T-cell (primary cell): ENCODE measurements at regions of chr3 and their contacts with region 1.

Region 1: GRCh38 chr3:153614563-153614962 is 452.5 kb downstream of the RAP2B start:
- DNase-seq: no peak
- ATAC-seq: no peak
- H3K4me3 ChIP-seq: no peak overlapping the region
- H3K4me3 Mint-ChIP-seq: no peak overlapping the region
- H3K27ac ChIP-seq: no peak overlapping the region
- H3K27ac Mint-ChIP-seq: no peak overlapping the region
- H3K4me1 ChIP-seq: no peaks in the 10 kb centered on the region
- H3K4me1 Mint-ChIP-seq: peaks cover 0 to 3% (median 0%) of the 10 kb centered on the region in 3 donors
- H3K27me3 ChIP-seq: no peaks in the 10 kb centered on the region
- H3K27me3 Mint-ChIP-seq: no peaks in the 10 kb centered on the region

Region 2: GRCh38 chr3:153138276-153139210 is 476.0 kb before region 1 on chr3:
- CTCF ChIA-PET with region 1: interaction called in 1 of 2 experiments, 10 read pairs
- POLR2A ChIA-PET with region 1: no interaction called
- DNase-seq: peak in 1 of 35 experiments; percentile 5
- ATAC-seq: no peak
- H3K4me3 ChIP-seq: no peak overlapping the region
- H3K4me3 Mint-ChIP-seq: no peak overlapping the region
- H3K27ac ChIP-seq: no peak overlapping the region
- H3K27ac Mint-ChIP-seq: no peak overlapping the region
- H3K4me1 ChIP-seq: peaks cover 0 to 4% of the 10 kb centered on the region in 2 experiments
- H3K4me1 Mint-ChIP-seq: peaks cover 0 to 16% (median 13%) of the 10 kb centered on the region in 3 donors
- H3K27me3 ChIP-seq: peaks cover 0 to 4% of the 10 kb centered on the region in 2 experiments
- H3K27me3 Mint-ChIP-seq: no peaks in the 10 kb centered on the region

Region 3: DNA sequence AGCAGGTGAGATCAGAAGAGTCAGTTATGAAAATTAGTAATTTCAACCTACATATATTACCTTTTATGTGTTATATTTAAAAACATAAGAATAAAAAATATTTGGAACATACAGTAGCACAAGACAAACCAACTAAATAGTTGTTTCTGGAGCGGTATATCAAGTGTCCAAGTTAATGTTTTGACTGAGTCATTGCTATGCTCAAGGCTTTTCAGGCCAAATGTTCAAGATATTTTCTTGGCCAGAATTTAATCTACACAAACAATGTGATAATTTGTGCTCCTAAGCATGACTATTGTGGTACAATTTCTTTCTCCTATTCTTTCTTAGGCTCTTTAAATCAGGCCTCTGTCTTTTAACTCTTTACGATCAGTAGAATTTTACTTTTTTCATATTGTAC is 40.1 kb before region 1 on chr3:
- CTCF ChIA-PET with region 1: interaction called in 1 of 2 experiments, 11 read pairs
- POLR2A ChIA-PET with region 1: no interaction called
- DNase-seq: no peak
- ATAC-seq: no peak
- H3K4me3 ChIP-seq: no peak overlapping the region
- H3K4me3 Mint-ChIP-seq: no peak overlapping the region
- H3K27ac ChIP-seq: no peak overlapping the region
- H3K27ac Mint-ChIP-seq: no peak overlapping the region
- H3K4me1 ChIP-seq: no peaks in the 10 kb centered on the region
- H3K4me1 Mint-ChIP-seq: peaks cover 0 to 1% (median 0%) of the 10 kb centered on the region in 3 donors
- H3K27me3 ChIP-seq: no peaks in the 10 kb centered on the region
- H3K27me3 Mint-ChIP-seq: no peaks in the 10 kb centered on the region

Region 4: GRCh38 chr3:153590051-153590450 is 24.5 kb before region 1 on chr3:
- CTCF ChIA-PET with region 1: no interaction called
- POLR2A ChIA-PET with region 1: no interaction called
- DNase-seq: no peak
- ATAC-seq: no peak
- H3K4me3 ChIP-seq: no peak overlapping the region
- H3K4me3 Mint-ChIP-seq: no peak overlapping the region
- H3K27ac ChIP-seq: no peak overlapping the region
- H3K27ac Mint-ChIP-seq: no peak overlapping the region
- H3K4me1 ChIP-seq: no peaks in the 10 kb centered on the region
- H3K4me1 Mint-ChIP-seq: peaks cover 0 to 6% (median under 1%) of the 10 kb centered on the region in 3 donors
- H3K27me3 ChIP-seq: no peaks in the 10 kb centered on the region
- H3K27me3 Mint-ChIP-seq: no peaks in the 10 kb centered on the region